OCI-LY7 (cell line): ENCODE measurements at regions of chr6 and their contacts with region 1.

Region 1: DNA sequence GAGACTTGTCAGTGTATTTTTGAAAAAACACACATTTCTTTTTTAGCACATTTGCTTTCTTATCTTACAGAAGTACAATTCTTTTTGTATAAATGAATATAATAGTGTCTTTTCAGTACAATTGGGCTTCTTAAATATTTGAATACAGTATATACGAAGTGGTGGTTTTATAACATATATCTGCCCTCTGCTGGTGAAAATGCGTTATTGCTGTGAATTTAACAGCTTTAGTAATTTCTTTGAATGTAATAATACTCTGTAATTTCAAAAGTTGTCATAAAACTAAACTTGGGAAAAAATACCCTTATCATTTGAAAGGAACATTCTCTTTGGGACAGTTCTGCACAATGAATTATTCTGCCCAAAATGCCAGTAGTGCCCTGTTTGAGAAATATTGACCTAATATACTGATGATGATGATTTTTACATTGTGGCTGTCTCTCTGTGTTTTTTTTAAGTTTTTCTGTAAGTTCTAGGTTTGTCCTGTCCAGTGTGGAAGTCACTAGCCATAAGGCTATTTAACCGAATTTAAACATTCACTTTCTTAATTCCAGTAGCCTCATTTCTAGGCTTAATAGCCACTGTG is 19.0 kb downstream of the SMAP1 start:
- DNase-seq: peak; percentile 63
- H3K4me3 ChIP-seq: no peak overlapping the region
- H3K27ac ChIP-seq: no peak overlapping the region
- H3K4me1 ChIP-seq: no peaks in the 10 kb centered on the region
- CTCF ChIP-seq: peak; percentile 97

Region 2: DNA sequence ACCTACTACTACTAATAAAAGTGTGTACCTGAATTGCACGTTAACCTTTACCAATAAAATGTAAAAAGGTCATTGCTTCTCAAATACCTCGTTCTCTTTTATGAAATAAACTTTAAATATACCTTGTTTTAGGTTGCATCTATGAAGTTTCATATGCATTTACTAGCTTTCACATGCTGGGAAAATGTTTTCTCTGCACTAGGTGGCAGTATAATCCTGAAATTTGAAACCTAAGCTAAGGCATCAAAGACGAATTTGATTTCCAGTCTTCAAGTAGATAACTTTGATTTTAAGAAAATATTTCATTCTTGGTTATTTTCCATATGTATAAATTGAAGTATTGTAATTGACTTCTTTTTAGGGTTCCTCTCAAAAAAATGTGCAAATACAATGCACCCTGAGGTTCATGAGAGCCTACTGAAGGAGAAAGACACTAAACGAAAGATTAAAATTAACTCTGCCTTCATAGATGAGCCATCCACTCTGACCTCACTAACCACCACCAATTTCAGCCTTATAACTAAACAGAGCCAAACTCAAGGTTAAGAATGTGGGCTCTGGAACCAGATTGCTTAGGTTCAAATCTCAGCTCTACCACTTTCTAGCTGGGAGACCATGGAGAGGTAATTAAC is 376.5 kb before region 1 on chr6:
- CTCF ChIA-PET with region 1: no interaction called
- POLR2A ChIA-PET with region 1: no interaction called
- intact Hi-C with region 1: loop called (anchors 5 kb)
- DNase-seq: peak; percentile 38
- H3K4me3 ChIP-seq: no peak overlapping the region
- H3K27ac ChIP-seq: no peak overlapping the region
- H3K4me1 ChIP-seq: no peaks in the 10 kb centered on the region
- CTCF ChIP-seq: peak; percentile 88

Region 3: DNA sequence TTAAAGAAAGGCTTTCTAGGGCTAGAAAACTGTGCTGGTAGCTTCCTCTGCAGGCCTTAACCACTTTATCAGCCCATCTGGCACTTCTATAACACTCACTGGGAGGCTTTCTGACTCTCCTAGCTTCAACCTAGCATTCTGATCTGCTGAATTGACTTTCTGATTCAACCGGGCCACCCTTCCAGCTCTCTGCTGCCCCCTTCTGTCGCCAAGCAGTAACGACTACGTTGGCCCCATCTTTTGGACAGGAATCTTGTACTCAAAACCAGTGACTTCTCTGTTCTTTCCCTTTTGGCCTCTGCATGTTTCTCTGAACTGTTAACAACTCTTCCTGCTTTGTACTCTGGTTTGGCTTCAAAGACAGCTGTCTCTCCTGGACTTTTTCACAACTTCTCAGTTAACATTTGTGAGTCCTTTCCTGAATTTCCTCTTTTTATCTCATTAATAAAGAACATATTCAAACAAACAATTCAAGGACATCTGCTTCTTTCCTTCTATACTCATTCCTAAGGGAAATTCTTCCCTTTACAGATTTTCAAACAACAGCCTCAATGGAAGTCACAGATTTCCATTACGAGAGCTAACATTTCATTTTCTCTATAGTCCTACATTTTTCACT is 317.2 kb before region 1 on chr6:
- CTCF ChIA-PET with region 1: no interaction called
- POLR2A ChIA-PET with region 1: no interaction called
- intact Hi-C with region 1: loop called (anchors 5 kb)
- DNase-seq: peak; percentile 58
- H3K4me3 ChIP-seq: no peak overlapping the region
- H3K27ac ChIP-seq: no peak overlapping the region
- H3K4me1 ChIP-seq: no peaks in the 10 kb centered on the region
- CTCF ChIP-seq: peak; percentile 82

Region 4: GRCh38 chr6:70520575-70520974 is 166.1 kb before region 1 on chr6:
- CTCF ChIA-PET with region 1: no interaction called
- POLR2A ChIA-PET with region 1: interaction called, 9 read pairs
- intact Hi-C with region 1: loop called (anchors 2 kb)
- DNase-seq: peak; percentile 27
- H3K4me3 ChIP-seq: no peak overlapping the region
- H3K27ac ChIP-seq: no peak overlapping the region
- H3K4me1 ChIP-seq: no peaks in the 10 kb centered on the region
- CTCF ChIP-seq: peak; percentile 76

Region 5: GRCh38 chr6:70667711-70668498 is 18.7 kb before region 1 on chr6 and contains the start of gene SMAP1:
- CTCF ChIA-PET with region 1: interaction called, 3 read pairs
- POLR2A ChIA-PET with region 1: interaction called, 12 read pairs
- intact Hi-C with region 1: no loop called
- DNase-seq: peak; percentile 93
- H3K4me3 ChIP-seq: peak within 1 kb of the TSS; percentile 91
- H3K27ac ChIP-seq: peak within 1 kb of the TSS; percentile 64
- H3K4me1 ChIP-seq: peaks cover 19% of the 10 kb centered on the region
- CTCF ChIP-seq: no peak
- total RNA-seq, gene SMAP1: 10.9 and 15.1 TPM in 2 replicates